Right ventricle myocardium inferior (tissue), 1 donor: ENCODE measurements at regions of chr2 and their contacts with region 1.

Region 1: GRCh38 chr2:48070415-48070814 is 164.1 kb upstream of the FBXO11 start:
- DNase-seq: no peak
- ATAC-seq: no peak

Region 2: DNA sequence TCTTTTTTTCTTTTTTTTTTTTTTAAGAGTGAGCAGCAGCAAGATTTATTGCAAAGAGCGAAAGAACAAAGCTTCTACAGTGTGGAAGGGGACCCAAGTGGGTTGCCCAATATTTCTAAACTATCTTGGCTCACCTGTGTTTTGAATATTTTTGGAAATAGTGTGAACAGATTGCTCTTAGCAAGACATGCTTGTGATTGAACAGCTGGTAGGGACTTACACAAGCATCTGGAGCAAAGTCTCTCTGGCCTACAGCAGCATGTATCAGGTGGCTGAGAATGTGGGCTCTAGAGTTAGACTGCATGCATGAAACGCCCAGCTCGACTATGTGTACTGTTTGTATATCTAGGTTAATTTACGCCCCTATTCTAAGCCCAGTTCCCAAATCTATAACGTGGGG is 123.8 kb before region 1 on chr2:
- intact Hi-C with region 1: loop called (anchors 10 kb)
- DNase-seq: no peak
- ATAC-seq: no peak

Region 3: DNA sequence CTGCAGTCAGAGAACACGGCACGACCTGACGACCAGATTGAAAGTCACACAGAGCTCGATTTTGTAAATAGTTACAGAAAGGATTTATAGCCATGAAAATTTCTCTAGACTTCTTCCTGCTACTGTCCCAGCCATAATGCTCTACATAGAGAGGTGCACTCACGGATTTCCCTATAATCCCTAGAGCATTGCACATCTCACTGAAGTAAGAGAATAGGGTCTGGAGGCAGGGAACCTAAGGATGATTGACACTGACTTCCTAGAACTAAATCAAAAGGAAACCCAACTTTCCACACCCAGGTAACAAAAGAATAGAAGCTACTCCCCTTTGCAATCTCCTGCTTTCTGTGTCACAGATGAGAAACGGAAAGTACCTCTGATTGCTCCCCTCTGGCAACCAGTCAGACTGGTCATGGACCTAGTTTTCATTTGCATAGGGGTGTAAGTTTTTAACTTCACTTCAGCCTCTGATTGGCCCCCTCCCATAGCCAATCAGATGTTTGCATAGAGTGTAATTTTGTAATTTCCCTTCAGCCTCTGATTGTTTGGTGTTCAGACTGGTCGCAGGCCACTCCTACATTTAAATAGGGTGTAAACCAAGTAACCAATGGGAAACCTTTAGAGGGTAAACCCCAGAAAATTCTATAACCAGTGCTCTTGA is 105.5 kb before region 1 on chr2:
- intact Hi-C with region 1: no loop called
- DNase-seq: no peak
- ATAC-seq: no peak

Region 4: GRCh38 chr2:48343571-48344440 is 273.4 kb after region 1 on chr2:
- intact Hi-C with region 1: no loop called
- DNase-seq: no peak
- ATAC-seq: no peak